ENCODE measurements at regions of chr2 and their contacts with region 1.

Region 1: GRCh38 chr2:143223556-143223955 is 94.3 kb downstream of the ARHGAP15 start:
- DNase-seq: no peak
- ATAC-seq: no peak
- H3K4me3 ChIP-seq: no peak overlapping the region
- H3K27ac ChIP-seq: no peak overlapping the region
- H3K4me1 ChIP-seq: no peaks in the 10 kb centered on the region
- H3K27me3 ChIP-seq: no peaks in the 10 kb centered on the region
- CTCF ChIP-seq: no peak
- POLR2A ChIP-seq: no peak
- RAD21 ChIP-seq: no peak

Region 2: GRCh38 chr2:142769761-142770160 is 453.8 kb before region 1 on chr2:
- CTCF ChIA-PET with region 1: no interaction called
- POLR2A ChIA-PET with region 1: no interaction called
- dilution Hi-C with region 1: no loop called
- in situ Hi-C with region 1: no loop called
- intact Hi-C with region 1: no loop called
- DNase-seq: peak; percentile 7
- ATAC-seq: no peak
- H3K4me3 ChIP-seq: no peak overlapping the region
- H3K27ac ChIP-seq: no peak overlapping the region
- H3K4me1 ChIP-seq: no peaks in the 10 kb centered on the region
- H3K27me3 ChIP-seq: no peaks in the 10 kb centered on the region
- CTCF ChIP-seq: no peak
- POLR2A ChIP-seq: no peak
- RAD21 ChIP-seq: no peak

Region 3: DNA sequence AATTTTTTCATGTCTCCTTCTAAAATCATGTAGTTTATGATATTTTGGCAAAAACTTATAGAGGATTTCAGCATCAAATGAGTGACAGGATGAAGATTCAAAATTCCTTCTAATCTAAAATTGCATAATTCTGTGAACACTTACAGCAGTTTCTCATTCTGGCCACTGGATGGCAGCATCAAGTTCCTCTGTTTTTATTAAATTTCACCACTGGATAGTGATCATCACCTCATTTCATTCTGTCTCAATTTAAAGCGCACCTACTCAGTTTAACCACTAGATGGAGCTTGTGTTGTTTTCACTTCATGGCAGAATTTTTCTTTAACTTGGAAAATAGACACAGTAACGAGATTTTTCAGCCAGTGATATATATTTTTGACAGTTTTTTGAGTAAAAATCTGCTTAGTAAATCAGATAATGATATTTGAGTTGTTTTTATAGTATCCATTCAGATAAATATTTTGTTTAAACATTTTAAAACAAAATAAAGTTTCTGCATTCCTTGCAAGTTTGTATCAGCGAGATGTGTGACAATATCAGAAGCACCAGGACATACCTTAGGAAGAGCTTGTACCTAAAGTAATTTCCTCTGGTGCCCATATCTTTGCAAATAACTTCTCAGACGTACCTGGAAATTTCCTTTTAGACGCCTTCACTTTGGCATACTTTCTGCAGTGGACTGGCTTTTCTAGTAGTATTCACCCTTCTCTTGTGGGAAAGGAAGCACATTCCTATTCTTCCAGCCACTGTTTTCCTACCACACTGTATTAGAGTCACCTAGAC is 189.1 kb before region 1 on chr2:
- CTCF ChIA-PET with region 1: interaction called, 12 read pairs
- POLR2A ChIA-PET with region 1: no interaction called
- dilution Hi-C with region 1: no loop called
- in situ Hi-C with region 1: no loop called
- intact Hi-C with region 1: loop called (anchors 1 kb)
- DNase-seq: peak; percentile 82
- ATAC-seq: peak; percentile 97
- H3K4me3 ChIP-seq: no peak overlapping the region
- H3K27ac ChIP-seq: no peak overlapping the region
- H3K4me1 ChIP-seq: no peaks in the 10 kb centered on the region; the same call in 1 of the 2 replicates
- H3K27me3 ChIP-seq: no peaks in the 10 kb centered on the region
- CTCF ChIP-seq: peak; percentile 99
- POLR2A ChIP-seq: no peak
- RAD21 ChIP-seq: peak; percentile 76

Region 4: GRCh38 chr2:143162123-143162837 is 61.3 kb before region 1 on chr2:
- CTCF ChIA-PET with region 1: no interaction called
- POLR2A ChIA-PET with region 1: no interaction called
- dilution Hi-C with region 1: no loop called
- in situ Hi-C with region 1: no loop called
- intact Hi-C with region 1: loop called (anchors 2 kb)
- DNase-seq: peak; percentile 58
- ATAC-seq: peak; percentile 86
- H3K4me3 ChIP-seq: no peak overlapping the region
- H3K27ac ChIP-seq: no peak overlapping the region
- H3K4me1 ChIP-seq: no peaks in the 10 kb centered on the region
- H3K27me3 ChIP-seq: peaks cover 15% of the 10 kb centered on the region
- CTCF ChIP-seq: peak; percentile 57
- POLR2A ChIP-seq: no peak
- RAD21 ChIP-seq: peak; percentile 62

Region 5: GRCh38 chr2:143264851-143265250 is 41.3 kb after region 1 on chr2:
- CTCF ChIA-PET with region 1: no interaction called
- POLR2A ChIA-PET with region 1: no interaction called
- dilution Hi-C with region 1: no loop called
- in situ Hi-C with region 1: no loop called
- intact Hi-C with region 1: no loop called
- DNase-seq: peak; percentile 92
- ATAC-seq: peak; percentile 79
- H3K4me3 ChIP-seq: no peak overlapping the region
- H3K27ac ChIP-seq: no peak overlapping the region
- H3K4me1 ChIP-seq: 0 out of 2 replicates have a peak, but pooled peaks cover 2% of the 10 kb centered on the region
- H3K27me3 ChIP-seq: no peaks in the 10 kb centered on the region
- CTCF ChIP-seq: no peak
- POLR2A ChIP-seq: no peak
- RAD21 ChIP-seq: no peak